B cell (primary cell): ENCODE measurements at regions of chr9 and their contacts with region 1.

Region 1: GRCh38 chr9:125143375-125144090 is at the start of gene SCAI:
- DNase-seq: peak; percentile 98
- ATAC-seq: peak; percentile 98
- H3K4me3 ChIP-seq: peak within 1 kb of the TSS; percentile 41 to 70 (median 60)
- H3K4me3 Mint-ChIP-seq: peak within 1 kb of the TSS; percentile 98
- H3K27ac ChIP-seq: peak within 1 kb of the TSS in 1 of 2 donors; percentile 2
- H3K27ac Mint-ChIP-seq: peak within 1 kb of the TSS; percentile 88
- H3K4me1 ChIP-seq: peaks cover 9% of the 10 kb centered on the region in 2 donors
- H3K4me1 Mint-ChIP-seq: peaks cover 19% of the 10 kb centered on the region
- H3K27me3 ChIP-seq: no peaks in the 10 kb centered on the region
- H3K27me3 Mint-ChIP-seq: no peaks in the 10 kb centered on the region
- CTCF ChIP-seq: peak; percentile 96
- total RNA-seq, gene SCAI: 19.8 and 21.4 TPM in 2 replicates

Region 2: DNA sequence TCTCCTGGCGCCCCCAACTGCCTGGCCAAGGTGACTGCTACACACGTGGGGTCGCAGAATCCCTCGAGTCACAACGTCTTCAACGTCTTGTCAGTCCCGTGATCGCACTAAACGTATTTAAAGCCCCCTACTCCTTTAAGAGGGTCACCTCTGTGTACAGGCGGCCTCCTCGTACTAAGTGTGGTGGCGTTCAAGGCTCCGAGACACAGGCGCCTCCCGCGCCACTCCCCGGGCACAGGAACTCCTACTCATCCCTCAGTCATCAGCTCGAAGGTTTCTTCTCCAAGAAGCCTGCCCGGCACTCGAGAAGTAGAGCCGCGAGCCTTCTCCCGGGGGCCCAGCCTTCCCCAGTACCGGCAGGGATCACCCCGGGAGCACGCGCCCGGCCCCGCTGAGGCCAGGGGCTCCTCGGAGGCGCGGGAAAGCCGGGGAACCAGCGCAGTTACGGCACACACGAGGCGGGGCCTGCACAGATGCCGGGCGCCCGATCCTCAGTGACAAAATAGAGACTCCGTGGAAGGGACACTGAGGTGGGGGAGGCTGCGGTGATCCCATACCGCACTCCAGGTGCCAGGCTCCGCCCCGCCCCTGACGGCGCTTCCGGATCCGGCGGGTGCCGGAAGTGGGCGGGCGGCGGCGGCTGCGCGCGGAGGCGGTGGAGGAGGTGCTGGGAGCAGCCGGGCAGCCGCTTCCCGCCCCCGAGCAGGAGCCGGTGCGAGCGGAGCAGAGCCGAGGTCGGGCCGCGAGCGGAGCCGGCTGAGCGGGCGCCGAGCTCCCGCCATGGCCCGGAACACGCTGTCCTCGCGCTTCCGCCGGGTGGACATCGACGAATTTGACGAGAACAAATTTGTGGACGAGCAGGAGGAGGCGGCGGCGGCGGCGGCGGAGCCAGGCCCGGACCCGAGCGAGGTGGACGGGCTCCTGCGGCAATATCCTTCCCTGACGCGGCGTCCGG is 274.7 kb before region 1 on chr9:
- CTCF ChIA-PET with region 1: no interaction called
- POLR2A ChIA-PET with region 1: no interaction called
- intact Hi-C with region 1: loop called (anchors 5 kb)
- DNase-seq: peak; percentile 92
- ATAC-seq: peak; percentile 72
- H3K4me3 ChIP-seq: peak overlapping the region; percentile 79 to 100 (median 97)
- H3K4me3 Mint-ChIP-seq: peak overlapping the region; percentile 94
- H3K27ac ChIP-seq: peak overlapping the region; percentile 92 to 96
- H3K27ac Mint-ChIP-seq: peak overlapping the region; percentile 97
- H3K4me1 ChIP-seq: peaks cover 44 to 52% of the 10 kb centered on the region in 2 donors
- H3K4me1 Mint-ChIP-seq: peaks cover 54% of the 10 kb centered on the region
- H3K27me3 ChIP-seq: no peaks in the 10 kb centered on the region
- H3K27me3 Mint-ChIP-seq: no peaks in the 10 kb centered on the region
- CTCF ChIP-seq: no peak

Region 3: DNA sequence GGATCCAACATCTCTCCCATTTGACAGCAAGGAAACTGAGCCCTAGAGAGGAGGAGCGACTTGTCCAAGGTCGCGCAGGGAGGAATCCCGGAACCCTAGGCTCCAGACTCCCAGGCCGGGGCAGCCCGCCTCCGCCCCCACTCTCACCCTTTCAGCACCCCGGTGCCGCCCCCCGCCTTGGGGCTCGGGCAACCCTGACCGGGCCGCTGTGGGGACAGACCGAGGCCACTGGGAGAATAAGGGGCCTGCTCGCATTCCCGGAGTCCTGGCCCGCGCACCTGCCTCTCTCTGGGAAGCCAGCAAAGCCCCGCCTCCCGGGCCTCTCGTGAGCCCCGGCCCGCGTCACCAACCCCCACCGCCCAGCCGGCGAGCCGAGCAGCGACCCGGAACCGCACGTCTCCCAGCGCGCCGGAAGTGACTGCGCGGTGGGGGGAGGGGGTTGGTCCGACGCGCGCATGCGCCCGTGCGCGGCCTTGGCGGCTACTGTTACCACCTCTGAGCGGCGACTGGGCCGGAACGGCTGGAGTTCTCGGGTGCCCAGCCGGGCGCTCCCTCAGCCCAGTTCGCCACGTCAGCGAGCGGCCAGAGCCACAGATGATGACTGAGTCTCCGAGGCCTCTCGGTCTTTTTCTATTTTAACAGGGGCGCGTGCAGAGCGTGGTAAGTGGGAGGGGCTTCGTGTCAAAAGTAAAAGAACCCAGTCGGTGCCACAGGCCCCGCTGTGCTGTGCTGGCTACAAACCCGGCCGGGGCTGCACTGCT is 202.7 kb before region 1 on chr9 and contains the start of gene GOLGA1:
- CTCF ChIA-PET with region 1: no interaction called
- POLR2A ChIA-PET with region 1: no interaction called
- intact Hi-C with region 1: loop called (anchors 2 kb)
- DNase-seq: peak; percentile 98
- ATAC-seq: peak; percentile 88
- H3K4me3 ChIP-seq: peak within 1 kb of the TSS; percentile 73 to 95 (median 91)
- H3K4me3 Mint-ChIP-seq: peak within 1 kb of the TSS; percentile 85
- H3K27ac ChIP-seq: peak within 1 kb of the TSS; percentile 98
- H3K27ac Mint-ChIP-seq: peak within 1 kb of the TSS; percentile 90
- H3K4me1 ChIP-seq: peaks cover 16 to 17% of the 10 kb centered on the region in 2 donors
- H3K4me1 Mint-ChIP-seq: peaks cover 26% of the 10 kb centered on the region
- H3K27me3 ChIP-seq: no peaks in the 10 kb centered on the region
- H3K27me3 Mint-ChIP-seq: no peaks in the 10 kb centered on the region
- CTCF ChIP-seq: no peak
- total RNA-seq, gene GOLGA1: 24.6 and 26.2 TPM in 2 replicates

Region 4: GRCh38 chr9:125189361-125190289 is 46.1 kb after region 1 on chr9 and contains the start of gene PPP6C:
- CTCF ChIA-PET with region 1: interaction called, 3 read pairs
- POLR2A ChIA-PET with region 1: no interaction called
- intact Hi-C with region 1: loop called (anchors 1 kb)
- DNase-seq: peak; percentile 98
- ATAC-seq: peak; percentile 98
- H3K4me3 ChIP-seq: peak within 1 kb of the TSS; percentile 89 to 99 (median 99)
- H3K4me3 Mint-ChIP-seq: peak within 1 kb of the TSS; percentile 97
- H3K27ac ChIP-seq: peak within 1 kb of the TSS; percentile 91 to 98
- H3K27ac Mint-ChIP-seq: peak within 1 kb of the TSS; percentile 96
- H3K4me1 ChIP-seq: peaks cover 19 to 27% of the 10 kb centered on the region in 2 donors
- H3K4me1 Mint-ChIP-seq: peaks cover 39% of the 10 kb centered on the region
- H3K27me3 ChIP-seq: no peaks in the 10 kb centered on the region
- H3K27me3 Mint-ChIP-seq: no peaks in the 10 kb centered on the region
- CTCF ChIP-seq: peak; percentile 78
- total RNA-seq, gene PPP6C: 36.1 and 38.6 TPM in 2 replicates

Region 5: DNA sequence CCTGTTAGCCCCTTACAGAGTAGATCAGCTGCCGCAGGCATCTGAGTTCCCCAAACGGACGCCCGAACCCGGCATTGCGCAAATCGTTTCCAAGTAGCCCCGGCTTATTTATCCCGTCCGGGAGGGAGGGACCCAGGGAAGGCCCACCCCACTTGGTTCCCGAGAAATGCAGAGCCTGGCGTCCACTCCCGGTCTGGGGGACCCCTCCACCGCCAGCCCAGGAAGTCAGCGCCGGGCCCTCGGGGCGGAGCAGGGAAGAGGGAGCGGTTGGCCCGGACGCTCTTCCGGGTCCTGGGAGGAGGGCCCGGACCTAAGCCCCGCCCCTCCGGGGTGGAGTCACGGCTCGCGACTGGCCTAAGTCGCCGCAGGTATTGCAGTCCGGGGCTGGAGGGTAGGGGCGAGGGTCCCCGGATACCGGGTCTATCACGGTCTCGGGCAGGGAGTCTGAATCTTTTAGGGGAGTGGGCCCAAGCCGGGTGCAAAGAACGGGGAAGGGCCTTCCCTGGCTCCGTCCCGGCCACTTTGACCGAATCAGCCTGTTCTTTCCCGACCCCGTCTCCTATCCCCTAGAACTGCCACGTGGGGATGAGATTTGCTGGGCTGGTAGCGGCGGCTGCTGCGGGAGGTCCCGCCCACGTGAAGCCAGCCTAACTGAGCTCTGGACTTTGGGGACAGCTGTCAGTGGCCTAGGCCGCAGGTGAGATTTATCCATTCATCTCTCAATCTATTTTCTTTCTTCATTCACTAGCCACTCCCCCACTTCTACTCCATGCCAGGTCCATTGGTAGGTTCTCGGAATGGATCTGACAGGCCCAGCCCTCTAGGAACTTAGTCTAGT is 56.9 kb after region 1 on chr9 and contains the start of gene RABEPK:
- CTCF ChIA-PET with region 1: interaction called, 4 read pairs
- POLR2A ChIA-PET with region 1: interaction called, 4 read pairs
- intact Hi-C with region 1: loop called (anchors 1 kb)
- DNase-seq: peak; percentile 94
- ATAC-seq: peak; percentile 98
- H3K4me3 ChIP-seq: peak within 1 kb of the TSS; percentile 61 to 96 (median 83)
- H3K4me3 Mint-ChIP-seq: peak within 1 kb of the TSS; percentile 96
- H3K27ac ChIP-seq: peak within 1 kb of the TSS; percentile 79 to 93
- H3K27ac Mint-ChIP-seq: peak within 1 kb of the TSS; percentile 95
- H3K4me1 ChIP-seq: peaks cover 10 to 16% of the 10 kb centered on the region in 2 donors
- H3K4me1 Mint-ChIP-seq: peaks cover 15% of the 10 kb centered on the region
- H3K27me3 ChIP-seq: no peaks in the 10 kb centered on the region
- H3K27me3 Mint-ChIP-seq: no peaks in the 10 kb centered on the region
- CTCF ChIP-seq: no peak
- total RNA-seq, gene RABEPK: 9.0 and 11.6 TPM in 2 replicates

Region 6: GRCh38 chr9:125241000-125241862 is 97.7 kb after region 1 on chr9 and contains the start of gene HSPA5:
- CTCF ChIA-PET with region 1: no interaction called
- POLR2A ChIA-PET with region 1: interaction called, 3 read pairs
- intact Hi-C with region 1: loop called (anchors 1 kb)
- DNase-seq: peak; percentile 100
- ATAC-seq: peak; percentile 90
- H3K4me3 ChIP-seq: peak within 1 kb of the TSS; percentile 82 to 98 (median 92)
- H3K4me3 Mint-ChIP-seq: peak within 1 kb of the TSS; percentile 95
- H3K27ac ChIP-seq: peak within 1 kb of the TSS; percentile 98 to 99
- H3K27ac Mint-ChIP-seq: peak within 1 kb of the TSS; percentile 93
- H3K4me1 ChIP-seq: peaks cover 16 to 26% of the 10 kb centered on the region in 2 donors
- H3K4me1 Mint-ChIP-seq: peaks cover 50% of the 10 kb centered on the region
- H3K27me3 ChIP-seq: no peaks in the 10 kb centered on the region
- H3K27me3 Mint-ChIP-seq: no peaks in the 10 kb centered on the region
- CTCF ChIP-seq: no peak
- total RNA-seq, gene HSPA5: 40.1 and 42.6 TPM in 2 replicates

Region 7: DNA sequence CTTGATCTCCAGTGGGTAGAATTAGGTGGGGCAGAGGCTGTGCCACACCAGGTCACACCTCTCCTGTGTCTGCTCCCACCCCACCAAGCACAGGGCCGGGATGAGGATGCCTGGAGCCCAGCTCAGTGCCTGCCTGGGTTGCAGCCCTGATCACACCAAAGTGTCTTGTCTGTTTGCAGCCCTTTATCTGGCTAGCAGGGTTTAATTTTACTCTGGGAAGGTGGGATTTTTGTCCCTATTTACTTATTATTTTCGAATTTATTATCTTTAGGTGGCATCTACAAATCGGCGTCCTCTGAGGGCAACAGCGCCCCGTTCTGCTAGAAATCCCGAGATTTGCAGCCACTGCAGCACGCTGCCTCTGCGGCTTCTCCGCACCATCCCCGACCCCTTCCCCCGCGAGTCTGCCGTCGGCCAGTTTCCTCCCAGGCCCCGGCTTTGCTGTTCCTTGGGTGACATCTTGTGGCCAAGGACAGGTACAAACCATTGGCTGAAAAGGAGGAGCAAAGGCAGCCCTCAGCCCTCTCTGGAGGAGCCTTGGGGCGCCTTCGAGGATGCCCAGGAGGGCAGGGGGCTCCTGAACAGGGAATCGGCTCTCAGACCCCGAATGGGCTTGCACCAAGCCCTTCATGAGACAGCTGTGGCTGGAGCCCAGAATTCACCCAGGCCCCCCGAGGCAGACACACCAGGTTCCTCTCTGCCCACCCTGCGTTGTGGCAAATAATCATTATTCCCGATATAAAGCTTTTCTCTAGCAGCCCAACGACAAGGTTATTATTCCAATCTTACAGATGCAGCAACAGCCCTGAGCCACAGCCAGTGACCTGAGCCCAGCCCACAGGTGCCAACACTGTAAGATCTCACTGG is 231.1 kb after region 1 on chr9:
- CTCF ChIA-PET with region 1: no interaction called
- POLR2A ChIA-PET with region 1: no interaction called
- intact Hi-C with region 1: loop called (anchors 2 kb)
- DNase-seq: peak; percentile 75
- ATAC-seq: peak; percentile 91
- H3K4me3 ChIP-seq: peak overlapping the region in 3 of 5 experiments; percentile 15 to 38 (median 15)
- H3K4me3 Mint-ChIP-seq: peak overlapping the region; percentile 66
- H3K27ac ChIP-seq: no peak overlapping the region
- H3K27ac Mint-ChIP-seq: no peak overlapping the region
- H3K4me1 ChIP-seq: peaks cover 7 to 10% of the 10 kb centered on the region in 2 donors
- H3K4me1 Mint-ChIP-seq: peaks cover 7% of the 10 kb centered on the region
- H3K27me3 ChIP-seq: peaks cover 0 to 32% (median 3%) of the 10 kb centered on the region in 4 experiments
- H3K27me3 Mint-ChIP-seq: peaks cover 7% of the 10 kb centered on the region
- CTCF ChIP-seq: peak; percentile 77